Heart right ventricle (tissue), 16 donors: ENCODE measurements at regions of chr2 and their contacts with region 1.

Region 1: GRCh38 chr2:28751252-28751955 is at the start of gene PPP1CB:
- DNase-seq: peak; percentile 94 to 97
- ATAC-seq: peak; percentile 92 to 98 (median 94)
- H3K4me3 ChIP-seq: peak within 1 kb of the TSS; percentile 76 to 98 (median 94)
- H3K27ac ChIP-seq: peak within 1 kb of the TSS; percentile 95 to 100 (median 100)
- H3K4me1 ChIP-seq: peaks cover 8 to 56% (median 44%) of the 10 kb centered on the region in 9 donors
- H3K27me3 ChIP-seq: no peaks in the 10 kb centered on the region
- CTCF ChIP-seq: peak in 8 of 9 donors; percentile 21 to 55 (median 38)
- total RNA-seq, gene PPP1CB: 381 to 525 (median 432) TPM

Region 2: DNA sequence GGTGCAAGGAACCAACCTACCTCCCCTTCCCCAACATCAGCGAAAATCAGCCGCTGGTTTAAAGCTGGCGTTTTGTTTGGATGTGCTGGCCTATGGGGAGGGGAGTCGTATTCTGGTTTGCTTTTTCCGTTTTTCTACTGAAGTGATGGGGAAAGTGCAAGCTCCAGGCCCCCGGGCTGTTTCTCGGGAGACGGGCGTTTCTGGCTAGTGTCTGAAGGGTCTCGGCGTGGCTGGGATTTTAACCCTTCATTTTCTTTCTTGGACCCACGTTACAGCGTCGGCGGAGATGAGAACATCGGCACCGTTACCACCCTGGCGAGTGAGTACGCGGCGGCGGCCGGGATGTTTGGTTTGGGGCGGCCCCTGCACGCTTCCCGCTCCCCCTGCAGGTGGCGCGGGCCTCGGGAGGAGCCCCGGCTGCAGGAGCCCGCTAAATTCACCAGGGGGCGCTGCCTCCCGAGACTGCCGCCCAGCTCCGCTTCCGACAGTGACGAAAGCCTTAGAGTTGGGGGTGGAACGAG is 184.8 kb before region 1 on chr2:
- intact Hi-C with region 1: loop called in 4 of 10 experiments (anchors 2 to 10 kb)
- DNase-seq: peak; percentile 83 to 88
- ATAC-seq: peak; percentile 92 to 98 (median 95)
- H3K4me3 ChIP-seq: peak overlapping the region; percentile 36 to 82 (median 61)
- H3K27ac ChIP-seq: peak overlapping the region in 9 of 10 donors; percentile 34 to 81 (median 61)
- H3K4me1 ChIP-seq: peaks cover 0 to 13% (median 4%) of the 10 kb centered on the region in 9 donors
- H3K27me3 ChIP-seq: no peaks in the 10 kb centered on the region
- CTCF ChIP-seq: peak; percentile 98 to 100 (median 100)

Region 3: DNA sequence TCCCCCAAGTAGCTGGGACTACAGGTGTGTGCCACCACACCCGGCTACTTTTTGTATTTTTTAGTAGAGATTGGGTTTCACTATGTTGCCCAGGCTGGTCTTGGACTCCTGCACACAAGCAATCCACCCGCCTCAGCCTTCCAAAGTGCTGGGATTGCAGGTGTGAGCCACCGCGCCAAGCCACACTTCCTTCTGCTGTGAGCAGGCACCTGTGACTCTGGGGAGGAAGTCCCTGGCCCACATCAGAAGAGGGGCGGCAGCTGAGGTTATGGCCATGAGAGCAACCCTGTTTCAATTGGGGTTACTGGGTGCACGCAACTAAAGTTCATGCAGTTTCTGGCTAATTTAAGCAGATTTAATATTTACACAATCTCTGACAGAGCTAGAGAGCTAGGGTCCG is 164.5 kb before region 1 on chr2:
- intact Hi-C with region 1: loop called in 3 of 10 experiments (anchors 2 to 10 kb)
- DNase-seq: no peak
- ATAC-seq: no peak
- H3K4me3 ChIP-seq: no peak overlapping the region
- H3K27ac ChIP-seq: no peak overlapping the region
- H3K4me1 ChIP-seq: peaks cover 0 to 47% (median 32%) of the 10 kb centered on the region in 9 donors
- H3K27me3 ChIP-seq: no peaks in the 10 kb centered on the region
- CTCF ChIP-seq: no peak

Region 4: DNA sequence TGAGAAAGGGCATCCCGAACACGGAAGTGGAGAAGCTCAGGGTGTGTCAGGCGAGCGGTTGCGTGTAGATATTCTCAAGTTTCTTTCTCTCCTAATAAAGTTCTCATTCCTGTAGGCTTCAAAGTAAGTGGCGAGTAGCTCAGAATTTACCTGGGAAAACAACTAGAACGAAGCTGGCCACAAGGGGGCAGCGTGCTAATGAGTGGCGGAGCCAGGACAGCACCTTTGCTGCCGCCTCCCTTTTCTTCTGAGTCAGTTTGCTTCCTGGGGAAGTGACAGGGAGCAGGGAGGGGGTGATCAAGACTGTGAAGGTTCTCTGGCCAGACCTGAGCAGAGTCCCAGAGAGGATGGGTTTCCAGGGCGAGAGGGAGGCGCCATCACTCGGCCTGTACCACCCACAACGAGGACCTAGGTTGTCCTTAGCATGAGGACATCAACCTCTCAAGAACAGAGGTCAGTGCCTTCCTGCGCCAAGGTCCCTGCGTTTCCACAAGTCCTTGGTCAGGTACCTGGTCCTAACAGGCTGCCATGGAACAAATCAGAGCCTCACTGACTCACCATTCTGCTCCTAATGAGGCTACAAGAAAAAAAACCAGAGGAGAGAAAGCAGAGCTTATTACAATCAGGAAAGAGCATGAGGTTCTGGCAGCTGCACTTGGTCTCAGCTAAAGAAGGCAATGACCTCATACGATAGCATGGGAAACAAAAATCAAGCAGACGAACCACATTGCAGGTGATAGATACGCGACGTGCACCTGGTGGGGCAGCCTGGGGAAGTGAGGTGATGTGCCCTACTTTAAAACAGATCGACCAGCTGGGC is 156.9 kb before region 1 on chr2:
- intact Hi-C with region 1: loop called in 9 of 10 experiments (anchors 1 to 10 kb)
- DNase-seq: peak; percentile 86 to 89
- ATAC-seq: peak; percentile 74 to 93 (median 86)
- H3K4me3 ChIP-seq: peak overlapping the region in 6 of 10 donors; percentile 3 to 30 (median 28)
- H3K27ac ChIP-seq: peak overlapping the region; percentile 53 to 95 (median 86)
- H3K4me1 ChIP-seq: peaks cover 0 to 44% (median 20%) of the 10 kb centered on the region in 9 donors
- H3K27me3 ChIP-seq: no peaks in the 10 kb centered on the region
- CTCF ChIP-seq: peak; percentile 68 to 93 (median 86)

Region 5: DNA sequence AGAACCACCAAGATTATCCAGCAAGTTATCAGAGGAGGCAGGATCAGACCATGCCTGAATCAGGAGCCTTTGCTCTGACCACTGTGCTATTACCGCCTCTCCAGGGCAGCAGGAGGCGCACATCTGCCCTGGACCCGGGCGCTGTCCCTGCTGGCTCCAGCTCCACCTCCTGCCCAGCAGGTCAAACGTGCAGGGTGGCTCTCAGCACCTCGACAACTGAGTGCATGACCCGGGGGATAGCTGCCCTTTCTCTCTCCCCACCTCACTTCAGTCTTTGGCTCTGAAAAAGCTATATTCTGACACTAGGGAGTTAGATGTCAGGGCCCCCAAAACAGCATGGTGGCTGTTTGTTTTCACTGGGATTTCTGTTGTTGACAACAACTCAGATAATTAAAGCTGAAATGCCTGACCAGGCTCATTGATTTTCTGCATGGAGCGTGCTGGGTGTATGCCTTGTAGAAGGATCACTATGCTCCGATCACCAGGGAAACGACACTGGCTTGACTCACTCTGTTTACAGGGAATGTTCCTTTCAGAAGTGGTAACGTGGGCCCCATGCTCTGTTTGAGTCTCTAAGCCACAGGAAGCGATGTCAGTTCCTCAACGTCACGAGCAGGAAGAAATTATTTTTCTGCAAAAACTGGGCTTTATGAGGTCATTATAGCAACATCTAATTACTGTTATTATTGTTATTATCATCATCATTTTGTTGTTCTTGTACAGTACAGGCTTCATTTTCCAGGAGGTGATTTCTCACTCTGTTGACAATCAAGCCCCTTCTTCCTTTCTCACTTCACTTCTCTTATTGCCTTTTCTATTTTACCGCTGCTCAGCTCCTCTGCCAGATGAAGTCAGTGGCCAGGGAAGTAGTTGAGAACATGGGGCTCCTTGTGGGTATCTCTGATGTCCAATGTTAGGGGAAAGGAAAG is 130.0 kb before region 1 on chr2:
- intact Hi-C with region 1: loop called in 2 of 10 experiments (anchors 10 kb)
- DNase-seq: peak in 1 of 2 donors; percentile 84
- ATAC-seq: peak; percentile 70 to 94 (median 86)
- H3K4me3 ChIP-seq: peak overlapping the region in 1 of 10 donors; percentile 27
- H3K27ac ChIP-seq: peak overlapping the region; percentile 27 to 92 (median 72)
- H3K4me1 ChIP-seq: peaks cover 14 to 62% (median 44%) of the 10 kb centered on the region in 9 donors
- H3K27me3 ChIP-seq: no peaks in the 10 kb centered on the region
- CTCF ChIP-seq: peak in 7 of 9 donors; percentile 7 to 48 (median 38)

Region 6: GRCh38 chr2:28661589-28662001 is 89.8 kb before region 1 on chr2:
- intact Hi-C with region 1: loop called in 3 of 10 experiments (anchors 2 to 5 kb)
- DNase-seq: peak; percentile 55 to 84
- ATAC-seq: peak; percentile 68 to 86 (median 82)
- H3K4me3 ChIP-seq: no peak overlapping the region
- H3K27ac ChIP-seq: peak overlapping the region; percentile 18 to 82 (median 64)
- H3K4me1 ChIP-seq: peaks cover 11 to 64% (median 57%) of the 10 kb centered on the region in 9 donors
- H3K27me3 ChIP-seq: no peaks in the 10 kb centered on the region
- CTCF ChIP-seq: peak in 1 of 9 donors; percentile 15

Region 7: GRCh38 chr2:28681158-28681571 is 70.2 kb before region 1 on chr2:
- intact Hi-C with region 1: loop called in 5 of 10 experiments (anchors 1 to 5 kb)
- DNase-seq: no peak
- ATAC-seq: peak in 3 of 8 donors; percentile 23 to 48 (median 38)
- H3K4me3 ChIP-seq: no peak overlapping the region
- H3K27ac ChIP-seq: peak overlapping the region in 8 of 10 donors; percentile 34 to 84 (median 76)
- H3K4me1 ChIP-seq: peaks cover 5 to 79% (median 61%) of the 10 kb centered on the region in 9 donors
- H3K27me3 ChIP-seq: no peaks in the 10 kb centered on the region
- CTCF ChIP-seq: no peak